ENCODE measurements at regions of chr11 and their contacts with region 1.

Region 1: DNA sequence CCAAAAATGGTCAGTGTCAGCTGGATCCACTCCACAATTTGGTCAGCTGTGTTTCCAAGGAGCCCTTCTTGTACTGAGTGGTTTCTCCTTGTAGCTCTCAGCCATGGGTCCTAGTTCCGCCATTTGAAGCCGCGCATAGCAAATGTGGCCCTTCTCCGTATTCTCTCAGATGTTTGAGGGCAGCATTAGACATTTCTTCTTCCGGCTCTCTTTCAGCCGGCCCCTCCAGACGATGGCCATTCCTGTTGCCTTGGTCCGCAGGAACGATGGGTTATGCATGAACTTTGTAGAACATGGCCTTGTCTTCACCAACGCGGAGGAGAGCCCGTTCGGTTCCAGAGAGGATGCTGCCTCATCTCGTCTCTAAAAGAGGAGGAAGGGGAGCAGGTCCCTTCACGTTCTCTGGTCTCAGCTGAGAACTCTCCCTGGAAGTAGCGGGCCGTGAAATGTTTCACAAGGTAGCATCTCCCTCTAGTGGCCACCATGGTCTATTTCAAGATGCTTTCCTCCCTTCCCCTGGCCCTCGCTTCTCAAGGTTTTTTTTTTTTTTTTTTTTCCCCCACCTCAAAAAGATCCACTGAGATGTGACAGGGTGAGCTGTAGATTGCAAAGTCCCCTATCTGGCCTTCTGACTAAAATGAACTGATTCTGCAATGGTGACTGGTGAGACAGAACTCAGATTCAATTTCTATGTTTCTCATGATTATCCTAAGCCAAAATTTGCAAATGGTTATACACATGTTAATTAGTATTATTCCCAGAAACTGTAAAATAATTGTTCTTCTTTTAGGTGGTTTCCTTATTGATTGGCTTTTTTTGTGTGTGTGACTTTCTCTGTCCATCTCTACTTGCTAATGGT is 19.8 kb upstream of the PLET1 start:
- DNase-seq: peak; percentile 81
- ATAC-seq: peak; percentile 91
- H3K4me3 Mint-ChIP-seq: peak overlapping the region; percentile 88
- H3K27ac Mint-ChIP-seq: peak overlapping the region; percentile 74
- H3K4me1 Mint-ChIP-seq: peaks cover 31% of the 10 kb centered on the region
- H3K27me3 Mint-ChIP-seq: no peaks in the 10 kb centered on the region

Region 2: GRCh38 chr11:112113539-112114457 is 166.7 kb before region 1 on chr11:
- CTCF ChIA-PET with region 1: interaction called, 27 read pairs
- DNase-seq: no peak
- ATAC-seq: peak; percentile 57
- H3K4me3 Mint-ChIP-seq: no peak overlapping the region
- H3K27ac Mint-ChIP-seq: no peak overlapping the region
- H3K4me1 Mint-ChIP-seq: peaks cover 24% of the 10 kb centered on the region
- H3K27me3 Mint-ChIP-seq: no peaks in the 10 kb centered on the region

Region 3: DNA sequence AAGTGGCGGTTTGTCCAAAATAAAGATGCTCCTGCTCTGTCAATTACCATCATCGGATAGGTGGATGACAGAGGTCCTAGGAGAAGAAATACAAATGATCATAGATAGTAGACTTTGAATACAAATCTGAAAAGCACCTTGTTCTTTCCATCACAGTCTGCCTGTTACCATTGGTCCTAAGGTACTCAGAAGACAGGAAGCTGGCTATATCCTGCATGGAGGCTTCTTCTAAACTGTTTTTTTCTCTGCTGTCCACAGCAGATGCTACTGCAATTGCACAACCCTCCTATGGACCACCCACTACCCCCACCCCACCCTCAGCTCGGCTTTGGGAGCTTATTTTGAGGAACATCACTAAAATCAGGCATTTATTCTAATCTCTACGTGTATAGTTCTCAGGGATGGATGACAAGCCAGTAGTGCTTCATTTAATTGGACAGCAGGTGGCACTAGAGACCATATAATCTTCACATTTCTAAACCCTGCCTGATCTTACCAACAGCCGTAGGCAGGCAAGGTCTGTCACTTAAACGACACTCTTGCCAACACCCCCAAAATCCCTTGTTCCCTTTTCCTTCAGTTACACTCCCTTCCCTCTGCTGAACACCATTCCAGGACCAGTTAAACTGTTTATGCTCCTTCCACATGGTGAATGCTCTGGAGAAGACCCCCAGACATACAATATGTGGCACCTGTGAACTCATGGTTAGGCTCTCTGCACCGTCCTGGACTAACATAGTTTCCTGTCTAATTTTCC is 60.8 kb before region 1 on chr11:
- CTCF ChIA-PET with region 1: interaction called, 373 read pairs
- DNase-seq: peak; percentile 53
- ATAC-seq: peak; percentile 99
- H3K4me3 Mint-ChIP-seq: no peak overlapping the region
- H3K27ac Mint-ChIP-seq: no peak overlapping the region
- H3K4me1 Mint-ChIP-seq: peaks cover 9% of the 10 kb centered on the region
- H3K27me3 Mint-ChIP-seq: peaks cover 2% of the 10 kb centered on the region

Region 4: GRCh38 chr11:112229746-112230433 is 50.6 kb before region 1 on chr11:
- CTCF ChIA-PET with region 1: interaction called, 373 read pairs
- DNase-seq: no peak
- ATAC-seq: no peak
- H3K4me3 Mint-ChIP-seq: no peak overlapping the region
- H3K27ac Mint-ChIP-seq: no peak overlapping the region
- H3K4me1 Mint-ChIP-seq: peaks cover 29% of the 10 kb centered on the region
- H3K27me3 Mint-ChIP-seq: no peaks in the 10 kb centered on the region

Region 5: GRCh38 chr11:112260490-112260889 is 20.0 kb before region 1 on chr11 and contains the start of gene PLET1:
- CTCF ChIA-PET with region 1: interaction called, 12 read pairs
- DNase-seq: no peak
- ATAC-seq: no peak
- H3K4me3 Mint-ChIP-seq: no peak within 1 kb of the TSS
- H3K27ac Mint-ChIP-seq: no peak within 1 kb of the TSS
- H3K4me1 Mint-ChIP-seq: no peaks in the 10 kb centered on the region
- H3K27me3 Mint-ChIP-seq: no peaks in the 10 kb centered on the region
- total RNA-seq, gene PLET1: not detected

Region 6: DNA sequence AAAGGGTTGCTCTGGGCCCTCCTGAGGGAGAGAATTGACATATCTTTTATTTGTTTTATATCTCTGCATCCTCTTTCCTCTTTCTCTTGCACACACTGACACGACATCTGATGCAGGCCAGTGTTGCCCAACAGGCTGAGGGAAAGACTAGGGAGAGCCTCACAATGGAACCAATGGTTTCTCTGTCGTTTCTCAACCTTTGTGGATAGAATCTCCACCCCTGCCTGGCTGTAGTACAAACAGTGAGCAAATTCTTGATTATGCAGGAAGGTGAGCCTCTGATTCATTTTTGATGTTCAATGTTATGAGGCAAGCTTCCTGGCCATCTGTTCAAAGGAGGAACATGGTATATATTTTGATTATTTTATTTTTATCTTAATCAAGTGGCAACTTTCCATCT is 29.9 kb after region 1 on chr11:
- CTCF ChIA-PET with region 1: no interaction called
- DNase-seq: no peak
- ATAC-seq: no peak
- H3K4me3 Mint-ChIP-seq: no peak overlapping the region
- H3K27ac Mint-ChIP-seq: no peak overlapping the region
- H3K4me1 Mint-ChIP-seq: no peaks in the 10 kb centered on the region
- H3K27me3 Mint-ChIP-seq: no peaks in the 10 kb centered on the region